CD4-positive, alpha-beta memory T cell (primary cell): ENCODE measurements at regions of chr2 and their contacts with region 1.

Region 1: DNA sequence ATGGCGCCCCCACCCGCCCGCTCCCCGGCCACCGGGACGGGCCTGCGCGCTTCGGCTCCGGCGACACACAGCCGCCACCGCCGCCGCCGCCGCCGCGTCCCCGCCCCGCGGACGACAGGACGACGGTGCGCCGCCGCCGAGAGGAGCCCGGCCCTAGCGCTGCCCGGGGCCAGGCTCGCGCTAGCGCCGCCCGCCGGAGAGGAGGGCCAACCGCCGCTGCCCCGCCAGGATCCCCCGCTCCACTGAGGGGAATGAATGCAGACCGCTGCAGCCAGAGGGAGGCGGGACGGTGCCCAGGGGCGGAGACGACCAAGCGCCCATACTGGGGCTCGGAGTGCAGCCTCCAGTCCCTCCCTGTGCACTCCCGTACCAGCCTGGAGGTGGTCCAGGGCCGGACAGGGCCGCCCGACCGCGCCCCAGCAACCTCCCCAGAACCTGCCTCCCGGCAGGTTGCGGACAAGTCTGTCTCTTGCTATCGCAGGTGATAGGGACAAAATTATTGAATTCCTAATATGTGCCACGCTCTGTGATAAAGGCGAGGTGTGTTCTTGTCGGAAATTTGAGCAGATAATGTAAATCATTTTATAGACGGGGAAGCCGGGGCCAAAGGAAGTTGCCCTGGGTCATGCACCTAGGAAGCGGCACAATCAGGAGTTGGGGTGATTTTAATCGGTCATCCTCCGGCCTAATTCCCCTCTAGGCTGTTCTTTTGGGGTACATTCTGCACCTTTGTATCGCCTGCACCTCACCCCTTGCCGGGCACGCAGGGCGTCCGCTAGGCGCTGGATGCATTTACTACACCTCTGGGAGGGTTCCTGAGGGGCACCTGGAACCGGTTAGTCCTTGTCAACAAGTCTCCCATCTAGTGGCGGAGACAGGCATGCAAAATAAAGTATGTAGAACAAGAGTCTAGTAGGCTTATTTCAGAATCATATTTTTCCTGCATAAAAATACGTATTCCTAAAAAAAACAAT is at the start of gene TEX261:
- DNase-seq: peak; percentile 88 to 91 (median 89)
- H3K4me3 ChIP-seq: peak within 1 kb of the TSS; percentile 68 to 87
- H3K4me3 Mint-ChIP-seq: peak within 1 kb of the TSS; percentile 95 to 99 (median 96)
- H3K27ac ChIP-seq: peak within 1 kb of the TSS; percentile 81
- H3K27ac Mint-ChIP-seq: peak within 1 kb of the TSS; percentile 91 to 98 (median 95)
- H3K4me1 ChIP-seq: peaks cover 26% of the 10 kb centered on the region
- H3K4me1 Mint-ChIP-seq: peaks cover 24 to 40% (median 32%) of the 10 kb centered on the region in 4 donors
- H3K27me3 ChIP-seq: no peaks in the 10 kb centered on the region
- H3K27me3 Mint-ChIP-seq: no peaks in the 10 kb centered on the region
- total RNA-seq, gene TEX261: 61.1 to 70.0 TPM

Region 2: DNA sequence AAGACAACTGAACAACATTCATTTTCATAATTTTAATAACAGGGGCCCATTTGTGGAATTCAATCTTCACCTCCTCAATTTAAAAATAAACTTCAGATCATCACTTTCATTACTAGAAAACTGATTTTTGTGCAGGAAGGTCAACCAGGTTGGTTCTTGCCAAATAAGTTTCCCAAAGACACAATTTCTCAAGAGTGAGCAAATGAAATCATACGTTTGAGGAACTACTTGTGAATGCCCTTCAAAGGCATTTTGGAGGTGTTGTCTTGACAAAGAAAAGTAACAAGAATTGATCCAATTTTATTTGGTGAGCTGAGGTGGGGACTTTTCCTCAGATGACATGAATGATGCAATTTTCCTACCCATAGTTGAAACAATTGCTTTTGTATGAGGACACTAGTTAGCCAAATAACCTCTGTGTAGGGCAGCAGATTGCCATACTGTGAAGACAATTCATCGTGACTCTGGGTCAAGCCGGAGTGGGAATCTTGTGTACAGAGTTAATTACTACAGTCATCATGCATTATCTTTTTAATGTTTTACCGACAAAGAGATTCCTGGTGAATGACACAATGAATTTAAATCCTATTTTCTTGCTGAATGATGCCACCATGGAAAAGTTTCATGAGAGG is 563.2 kb before region 1 on chr2:
- CTCF ChIA-PET with region 1: no interaction called
- POLR2A ChIA-PET with region 1: no interaction called
- intact Hi-C with region 1: no loop called
- DNase-seq: no peak
- H3K4me3 ChIP-seq: no peak overlapping the region
- H3K4me3 Mint-ChIP-seq: no peak overlapping the region
- H3K27ac ChIP-seq: no peak overlapping the region
- H3K27ac Mint-ChIP-seq: no peak overlapping the region
- H3K4me1 ChIP-seq: no peaks in the 10 kb centered on the region
- H3K4me1 Mint-ChIP-seq: no peaks in the 10 kb centered on the region
- H3K27me3 ChIP-seq: no peaks in the 10 kb centered on the region
- H3K27me3 Mint-ChIP-seq: peaks cover 2 to 6% of the 10 kb centered on the region in 2 donors

Region 3: GRCh38 chr2:70977605-70978205 is 17.3 kb before region 1 on chr2:
- CTCF ChIA-PET with region 1: interaction called, 75 read pairs
- POLR2A ChIA-PET with region 1: interaction called, 4 read pairs
- intact Hi-C with region 1: loop called (anchors 1 kb)
- DNase-seq: peak in 3 of 5 donors; percentile 13 to 54 (median 22)
- H3K4me3 ChIP-seq: peak overlapping the region; percentile 65 to 76
- H3K4me3 Mint-ChIP-seq: peak overlapping the region; percentile 88 to 95 (median 90)
- H3K27ac ChIP-seq: peak overlapping the region; percentile 60
- H3K27ac Mint-ChIP-seq: peak overlapping the region; percentile 86 to 97 (median 93)
- H3K4me1 ChIP-seq: peaks cover 11% of the 10 kb centered on the region
- H3K4me1 Mint-ChIP-seq: peaks cover 10 to 25% (median 17%) of the 10 kb centered on the region in 4 donors
- H3K27me3 ChIP-seq: no peaks in the 10 kb centered on the region
- H3K27me3 Mint-ChIP-seq: peaks cover 0 to 2% of the 10 kb centered on the region in 2 donors

Region 4: DNA sequence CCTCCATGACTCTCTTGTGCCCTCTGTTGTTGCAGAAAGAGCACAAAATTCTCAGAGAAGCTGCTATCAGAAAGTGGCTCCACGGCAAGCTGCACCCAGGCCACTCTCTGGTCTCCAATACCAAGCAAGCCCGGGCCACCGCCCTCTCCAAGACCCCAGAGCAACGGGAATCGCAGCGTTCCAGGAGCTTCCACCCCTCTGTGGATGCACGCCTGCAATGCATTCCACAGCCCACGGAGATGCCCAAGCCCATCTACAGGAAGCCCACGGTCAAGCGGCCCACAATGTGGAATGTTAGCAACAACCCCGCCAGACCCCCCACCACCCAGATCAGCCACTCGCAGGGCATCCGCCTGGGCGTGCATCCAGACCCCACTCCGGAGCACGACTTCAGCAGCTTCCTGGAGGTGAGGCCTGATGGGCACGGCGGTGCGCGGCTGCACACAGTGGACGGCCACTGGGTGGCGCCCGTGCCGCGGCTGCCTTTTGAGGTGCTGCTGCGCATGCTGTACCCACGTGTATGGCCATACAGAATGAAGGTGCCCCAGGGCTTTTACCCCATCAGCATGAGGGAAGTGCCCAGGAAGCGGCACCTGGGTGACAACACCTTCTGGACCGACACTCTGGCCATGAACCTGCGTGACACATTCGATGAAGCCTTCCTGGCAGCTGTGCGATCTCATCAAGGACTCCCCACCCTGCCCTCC is 10.3 kb before region 1 on chr2:
- CTCF ChIA-PET with region 1: interaction called, 75 read pairs
- POLR2A ChIA-PET with region 1: interaction called, 6 read pairs
- intact Hi-C with region 1: loop called (anchors 1 kb)
- DNase-seq: peak; percentile 77 to 80 (median 79)
- H3K4me3 ChIP-seq: no peak overlapping the region
- H3K4me3 Mint-ChIP-seq: peak overlapping the region in 6 of 8 donors; percentile 6 to 51 (median 38)
- H3K27ac ChIP-seq: no peak overlapping the region
- H3K27ac Mint-ChIP-seq: peak overlapping the region in 3 of 7 donors; percentile 9 to 29 (median 27)
- H3K4me1 ChIP-seq: peaks cover 8% of the 10 kb centered on the region
- H3K4me1 Mint-ChIP-seq: peaks cover 9 to 30% (median 15%) of the 10 kb centered on the region in 4 donors
- H3K27me3 ChIP-seq: no peaks in the 10 kb centered on the region
- H3K27me3 Mint-ChIP-seq: no peaks in the 10 kb centered on the region

Region 5: DNA sequence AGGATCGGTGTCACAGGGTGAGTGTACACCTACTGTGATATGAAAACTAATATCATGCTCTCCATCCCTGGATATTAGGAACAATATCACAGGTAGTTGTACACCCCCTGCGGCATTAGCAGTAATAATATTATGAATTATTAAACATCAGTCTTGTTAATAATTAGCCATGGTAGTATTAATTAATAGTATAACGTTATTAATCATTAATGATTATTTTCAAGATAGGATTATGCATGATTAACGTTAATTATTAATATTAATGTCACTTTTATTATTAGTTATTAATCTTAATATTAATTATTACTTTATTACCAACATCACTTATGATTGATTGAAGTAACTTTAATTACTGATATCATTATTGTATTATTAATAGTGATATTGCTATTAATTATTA is 47.2 kb after region 1 on chr2:
- CTCF ChIA-PET with region 1: no interaction called
- POLR2A ChIA-PET with region 1: no interaction called
- intact Hi-C with region 1: no loop called
- DNase-seq: no peak
- H3K4me3 ChIP-seq: no peak overlapping the region
- H3K4me3 Mint-ChIP-seq: no peak overlapping the region
- H3K27ac ChIP-seq: no peak overlapping the region
- H3K27ac Mint-ChIP-seq: no peak overlapping the region
- H3K4me1 ChIP-seq: no peaks in the 10 kb centered on the region
- H3K4me1 Mint-ChIP-seq: no peaks in the 10 kb centered on the region
- H3K27me3 ChIP-seq: peaks cover 5% of the 10 kb centered on the region
- H3K27me3 Mint-ChIP-seq: peaks cover 8 to 18% of the 10 kb centered on the region in 2 donors

Region 6: DNA sequence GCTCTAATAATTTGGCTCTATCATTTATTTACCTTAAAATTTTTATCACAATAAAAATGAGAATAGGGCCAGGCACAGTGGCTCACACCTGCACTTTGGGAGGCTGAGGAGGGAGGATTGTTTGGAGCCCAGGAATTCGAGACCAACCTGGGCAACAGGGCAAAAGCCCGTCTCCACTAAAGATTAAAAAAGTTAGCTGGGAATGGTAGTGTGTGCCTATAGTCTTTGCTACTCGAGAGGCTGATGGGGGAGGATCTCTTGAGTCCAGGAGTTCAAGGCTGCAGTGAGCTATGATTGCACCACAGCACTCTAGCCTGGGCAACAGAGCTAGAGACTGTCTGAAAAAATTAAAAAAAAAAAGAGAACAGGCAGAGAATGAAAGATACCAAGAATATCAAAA is 141.1 kb after region 1 on chr2:
- CTCF ChIA-PET with region 1: no interaction called
- POLR2A ChIA-PET with region 1: no interaction called
- intact Hi-C with region 1: no loop called
- DNase-seq: no peak
- H3K4me3 ChIP-seq: no peak overlapping the region
- H3K4me3 Mint-ChIP-seq: no peak overlapping the region
- H3K27ac ChIP-seq: no peak overlapping the region
- H3K27ac Mint-ChIP-seq: peak overlapping the region in 1 of 7 donors; percentile 29
- H3K4me1 ChIP-seq: peaks cover 19% of the 10 kb centered on the region
- H3K4me1 Mint-ChIP-seq: peaks cover 0 to 1% (median under 1%) of the 10 kb centered on the region in 4 donors
- H3K27me3 ChIP-seq: no peaks in the 10 kb centered on the region
- H3K27me3 Mint-ChIP-seq: no peaks in the 10 kb centered on the region

Region 7: GRCh38 chr2:71813807-71814470 is 818.9 kb after region 1 on chr2:
- CTCF ChIA-PET with region 1: no interaction called
- POLR2A ChIA-PET with region 1: no interaction called
- intact Hi-C with region 1: no loop called
- DNase-seq: no peak
- H3K4me3 ChIP-seq: no peak overlapping the region
- H3K4me3 Mint-ChIP-seq: no peak overlapping the region
- H3K27ac ChIP-seq: no peak overlapping the region
- H3K27ac Mint-ChIP-seq: no peak overlapping the region
- H3K4me1 ChIP-seq: no peaks in the 10 kb centered on the region
- H3K4me1 Mint-ChIP-seq: no peaks in the 10 kb centered on the region
- H3K27me3 ChIP-seq: no peaks in the 10 kb centered on the region
- H3K27me3 Mint-ChIP-seq: peaks cover 4% of the 10 kb centered on the region in 2 donors